Activated naive CD8-positive, alpha-beta T cell treated with anti-CD3 and anti-CD28 coated beads, Interleukin-2, amount 10 ng/mL, durations not matched to agents 7 days and 5 days (primary cell): ENCODE measurements at regions of chr2 and their contacts with region 1.

Region 1: DNA sequence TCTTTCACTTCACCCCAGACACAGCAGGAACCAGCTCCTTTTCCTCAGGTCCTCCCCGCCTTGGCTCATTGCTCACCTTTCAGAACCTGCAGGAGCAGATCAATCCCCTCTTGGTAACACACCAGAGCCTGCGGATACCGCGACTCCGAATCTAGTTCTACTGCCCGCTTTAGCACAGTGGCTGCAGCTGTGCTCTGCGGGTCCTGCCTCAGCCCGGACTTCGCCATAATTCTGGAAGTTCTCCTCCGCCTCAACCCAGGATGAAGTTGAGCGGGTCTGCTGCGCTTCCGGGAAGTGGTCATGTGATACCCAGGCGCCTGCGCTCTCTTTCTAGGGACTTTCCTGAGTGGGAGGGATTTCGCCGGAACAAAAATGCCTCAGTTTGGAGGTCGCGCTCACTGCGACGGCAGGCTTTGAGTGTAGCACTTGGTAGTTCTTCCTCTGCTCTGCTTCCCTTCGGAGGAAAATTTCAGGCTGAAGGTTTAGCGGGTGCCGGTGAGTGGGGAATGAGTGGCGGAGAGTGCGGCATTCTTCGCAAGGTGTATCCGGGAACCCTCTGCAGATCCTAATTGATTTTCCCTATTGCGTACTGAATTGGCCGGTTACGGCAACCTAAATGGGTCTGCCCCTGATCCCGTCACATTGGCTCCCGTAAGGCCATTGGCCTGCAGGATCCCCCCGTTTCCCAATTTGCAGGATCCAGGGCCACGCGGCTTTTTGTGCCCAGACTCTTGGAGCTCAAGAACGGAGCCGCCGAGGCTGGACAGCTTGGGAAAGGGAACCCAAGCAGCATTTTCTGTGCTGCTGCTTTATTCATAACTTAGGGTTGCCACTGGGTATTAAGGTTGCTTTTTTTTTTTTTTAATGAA is at the starts of genes MITD1 and MRPL30:
- DNase-seq: peak; percentile 87
- ATAC-seq: peak; percentile 95
- H3K4me3 Mint-ChIP-seq: peak within 1 kb of the TSS; percentile 95
- H3K27ac Mint-ChIP-seq: peak within 1 kb of the TSS; percentile 92
- H3K4me1 Mint-ChIP-seq: peaks cover 37% of the 10 kb centered on the region
- H3K27me3 Mint-ChIP-seq: no peaks in the 10 kb centered on the region
- total RNA-seq, gene MITD1: 68.8 to 69.4 TPM
- total RNA-seq, gene MRPL30: 22.2 to 26.5 TPM

Region 2: GRCh38 chr2:99201959-99202678 is 21.1 kb after region 1 on chr2:
- POLR2A ChIA-PET with region 1: no interaction called
- DNase-seq: no peak
- ATAC-seq: no peak
- H3K4me3 Mint-ChIP-seq: no peak overlapping the region
- H3K27ac Mint-ChIP-seq: no peak overlapping the region
- H3K4me1 Mint-ChIP-seq: peaks cover 2% of the 10 kb centered on the region
- H3K27me3 Mint-ChIP-seq: no peaks in the 10 kb centered on the region

Region 3: GRCh38 chr2:99217929-99218501 is 37.0 kb after region 1 on chr2:
- POLR2A ChIA-PET with region 1: no interaction called
- DNase-seq: no peak
- ATAC-seq: peak; percentile 60
- H3K4me3 Mint-ChIP-seq: no peak overlapping the region
- H3K27ac Mint-ChIP-seq: no peak overlapping the region
- H3K4me1 Mint-ChIP-seq: peaks cover 7% of the 10 kb centered on the region
- H3K27me3 Mint-ChIP-seq: no peaks in the 10 kb centered on the region

Region 4: GRCh38 chr2:99337113-99338028 is 156.4 kb after region 1 on chr2 and contains the start of gene EIF5B:
- POLR2A ChIA-PET with region 1: interaction called, 15 read pairs
- DNase-seq: peak; percentile 92
- ATAC-seq: peak; percentile 79
- H3K4me3 Mint-ChIP-seq: no peak within 1 kb of the TSS
- H3K27ac Mint-ChIP-seq: no peak within 1 kb of the TSS
- H3K4me1 Mint-ChIP-seq: peaks cover 33% of the 10 kb centered on the region
- H3K27me3 Mint-ChIP-seq: no peaks in the 10 kb centered on the region
- total RNA-seq, gene EIF5B: 40.3 to 40.9 TPM